H1 (cell line): ENCODE measurements at regions of chr1 and their contacts with region 1.

Region 1: DNA sequence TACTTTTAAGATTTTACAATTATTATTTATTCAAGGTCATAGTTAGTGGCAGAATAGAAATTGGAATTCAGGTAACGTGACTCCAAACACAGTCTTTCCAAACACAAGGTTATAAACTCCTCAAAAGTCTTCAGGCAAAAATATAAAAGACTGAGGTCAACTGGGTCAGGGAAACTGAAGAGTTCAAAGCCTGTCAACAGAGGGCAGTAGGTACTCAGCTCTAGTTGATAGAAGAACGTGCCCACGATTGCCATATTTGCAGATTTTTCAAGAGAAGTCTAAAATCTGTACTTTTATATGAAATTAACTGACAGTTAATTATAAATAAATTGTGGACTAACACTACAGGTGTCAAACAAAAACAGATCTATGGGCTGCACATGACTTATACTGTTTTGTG is 135.0 kb downstream of the LHX4 start:
- DNase-seq: no peak
- H3K4me3 ChIP-seq: no peak overlapping the region
- H3K27ac ChIP-seq: no peak overlapping the region
- H3K4me1 ChIP-seq: peaks cover 2 to 11% (median 3%) of the 10 kb centered on the region in 4 experiments; a peak in 6 of 7 replicates
- H3K27me3 ChIP-seq: no peaks in the 10 kb centered on the region
- CTCF ChIP-seq: peak in 2 of 3 experiments; percentile 63 to 71; a peak in 3 of 4 replicates
- EP300 ChIP-seq: no peak
- POLR2A ChIP-seq: no peak
- RAD21 ChIP-seq: peak; percentile 64 to 76

Region 2: GRCh38 chr1:180353945-180354344 is 11.1 kb before region 1 on chr1:
- CTCF ChIA-PET with region 1: interaction called, 10 read pairs
- POLR2A ChIA-PET with region 1: no interaction called
- DNase-seq: peak in 1 of 2 experiments; percentile 9
- H3K4me3 ChIP-seq: no peak overlapping the region
- H3K27ac ChIP-seq: no peak overlapping the region
- H3K4me1 ChIP-seq: peaks cover 0 to 5% (median 2%) of the 10 kb centered on the region in 4 experiments; a peak in 2 of 7 replicates
- H3K27me3 ChIP-seq: no peaks in the 10 kb centered on the region
- CTCF ChIP-seq: no peak
- EP300 ChIP-seq: no peak
- POLR2A ChIP-seq: no peak
- RAD21 ChIP-seq: no peak

Region 3: DNA sequence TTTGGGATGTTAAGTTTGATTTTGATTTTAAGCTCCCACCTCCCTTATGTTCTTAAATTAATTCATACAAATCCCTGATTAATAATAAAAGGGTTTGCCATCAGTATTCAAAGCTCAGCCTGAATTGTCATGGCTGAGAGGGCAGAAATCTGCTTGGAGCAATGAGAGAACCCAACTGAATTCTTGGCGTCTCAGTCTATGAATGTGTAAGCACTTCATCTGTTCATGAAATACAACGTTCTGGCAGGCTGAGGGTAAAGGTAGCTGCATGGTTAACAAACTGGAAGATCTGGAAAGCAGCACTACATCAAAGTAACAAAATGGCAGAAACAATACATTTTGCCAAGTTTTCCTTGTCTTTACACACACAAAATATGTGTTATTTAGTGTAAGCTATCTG is 42.0 kb after region 1 on chr1:
- CTCF ChIA-PET with region 1: interaction called, 14 read pairs
- POLR2A ChIA-PET with region 1: no interaction called
- DNase-seq: no peak
- H3K4me3 ChIP-seq: no peak overlapping the region
- H3K27ac ChIP-seq: no peak overlapping the region
- H3K4me1 ChIP-seq: no peaks in the 10 kb centered on the region
- H3K27me3 ChIP-seq: no peaks in the 10 kb centered on the region
- CTCF ChIP-seq: no peak
- EP300 ChIP-seq: no peak
- POLR2A ChIP-seq: no peak
- RAD21 ChIP-seq: no peak

Region 4: DNA sequence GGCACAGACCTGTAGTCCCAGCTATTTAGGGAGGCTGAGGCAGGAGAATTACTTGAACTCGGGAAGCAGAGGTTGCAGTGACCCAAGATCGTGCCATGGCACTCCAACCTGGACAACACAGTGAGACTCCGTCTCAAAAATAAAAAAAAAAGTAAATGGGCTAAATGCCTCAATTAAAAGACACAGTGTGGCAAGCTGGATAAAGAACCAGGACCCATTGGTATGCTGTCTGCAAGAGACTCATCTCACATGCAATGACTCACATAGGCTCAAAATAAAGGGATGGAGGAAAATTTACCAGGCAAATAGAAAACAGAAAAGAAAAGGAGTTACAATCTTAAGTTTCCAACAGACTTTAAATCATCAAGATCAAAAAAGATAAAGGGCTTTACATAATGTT is 97.1 kb after region 1 on chr1:
- CTCF ChIA-PET with region 1: no interaction called
- POLR2A ChIA-PET with region 1: no interaction called
- DNase-seq: no peak
- H3K4me3 ChIP-seq: no peak overlapping the region
- H3K27ac ChIP-seq: no peak overlapping the region
- H3K4me1 ChIP-seq: no peaks in the 10 kb centered on the region
- H3K27me3 ChIP-seq: no peaks in the 10 kb centered on the region
- CTCF ChIP-seq: no peak
- EP300 ChIP-seq: no peak
- POLR2A ChIP-seq: no peak
- RAD21 ChIP-seq: no peak